ENCODE measurements at regions of chr3 and their contacts with region 1.

Region 1: GRCh38 chr3:190533511-190534277 is 19.8 kb downstream of the IL1RAP start:
- DNase-seq: peak; percentile 98
- H3K4me3 ChIP-seq: peak overlapping the region; percentile 13 to 30 (median 19)
- H3K27ac ChIP-seq: peak overlapping the region; percentile 95
- H3K4me1 ChIP-seq: peaks cover 70% of the 10 kb centered on the region
- H3K27me3 ChIP-seq: no peaks in the 10 kb centered on the region
- CTCF ChIP-seq: no peak

Region 2: GRCh38 chr3:189883113-189883753 is 650.5 kb before region 1 on chr3:
- CTCF ChIA-PET with region 1: no interaction called
- dilution Hi-C with region 1: no loop called
- in situ Hi-C with region 1: no loop called
- intact Hi-C with region 1: no loop called
- DNase-seq: no peak
- H3K4me3 ChIP-seq: no peak overlapping the region
- H3K27ac ChIP-seq: no peak overlapping the region
- H3K4me1 ChIP-seq: no peaks in the 10 kb centered on the region
- H3K27me3 ChIP-seq: no peaks in the 10 kb centered on the region
- CTCF ChIP-seq: no peak

Region 3: DNA sequence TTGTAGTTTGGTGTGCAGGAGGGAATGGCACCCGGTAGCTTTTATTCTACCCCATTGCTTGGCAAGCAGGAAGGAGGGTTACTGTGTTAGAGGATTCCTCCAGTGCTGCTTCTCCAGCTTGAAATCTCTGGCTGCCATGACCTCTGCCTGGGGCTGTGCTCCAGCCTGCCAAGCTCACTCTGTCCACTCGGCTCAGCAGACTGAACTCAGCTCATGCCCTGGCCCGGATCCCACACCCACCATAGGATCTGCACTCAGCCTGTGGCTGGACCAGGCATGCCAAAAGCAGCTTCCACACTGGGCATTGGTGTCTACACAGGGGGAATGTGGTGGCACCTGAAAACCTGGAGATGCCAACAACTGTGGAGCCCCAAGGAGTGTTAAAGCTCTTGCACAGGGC is 119.4 kb before region 1 on chr3:
- CTCF ChIA-PET with region 1: no interaction called
- dilution Hi-C with region 1: no loop called
- in situ Hi-C with region 1: no loop called
- intact Hi-C with region 1: no loop called
- DNase-seq: no peak
- H3K4me3 ChIP-seq: no peak overlapping the region
- H3K27ac ChIP-seq: no peak overlapping the region
- H3K4me1 ChIP-seq: no peaks in the 10 kb centered on the region
- H3K27me3 ChIP-seq: no peaks in the 10 kb centered on the region
- CTCF ChIP-seq: no peak

Region 4: DNA sequence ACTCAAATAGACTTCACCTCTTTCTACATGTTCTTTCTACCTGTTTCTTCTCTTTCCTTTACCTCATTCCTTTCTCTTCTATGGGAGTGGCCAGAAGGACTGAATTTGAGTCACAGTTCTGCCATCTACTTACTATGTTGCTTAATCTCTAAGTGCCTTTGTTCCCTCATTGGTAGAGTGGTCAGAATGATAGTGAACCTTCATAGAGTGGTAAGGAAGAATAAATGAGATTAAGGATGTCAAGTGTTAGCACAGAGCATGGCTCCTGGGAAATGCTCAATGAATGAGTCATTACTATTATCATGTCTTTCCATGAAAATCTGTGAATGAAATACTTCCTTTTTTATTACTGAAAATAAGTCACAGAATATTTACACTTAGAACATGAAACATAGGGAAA is 101.5 kb before region 1 on chr3:
- CTCF ChIA-PET with region 1: no interaction called
- dilution Hi-C with region 1: no loop called
- in situ Hi-C with region 1: no loop called
- intact Hi-C with region 1: no loop called
- DNase-seq: peak; percentile 63
- H3K4me3 ChIP-seq: no peak overlapping the region
- H3K27ac ChIP-seq: no peak overlapping the region
- H3K4me1 ChIP-seq: peaks cover 30% of the 10 kb centered on the region
- H3K27me3 ChIP-seq: no peaks in the 10 kb centered on the region
- CTCF ChIP-seq: no peak

Region 5: GRCh38 chr3:190566043-190566933 is 32.6 kb after region 1 on chr3:
- CTCF ChIA-PET with region 1: no interaction called
- dilution Hi-C with region 1: no loop called
- in situ Hi-C with region 1: no loop called
- intact Hi-C with region 1: loop called (anchors 1 kb)
- DNase-seq: peak; percentile 100
- H3K4me3 ChIP-seq: no peak overlapping the region
- H3K27ac ChIP-seq: peak overlapping the region; percentile 96
- H3K4me1 ChIP-seq: peaks cover 28% of the 10 kb centered on the region
- H3K27me3 ChIP-seq: no peaks in the 10 kb centered on the region
- CTCF ChIP-seq: no peak

Region 6: DNA sequence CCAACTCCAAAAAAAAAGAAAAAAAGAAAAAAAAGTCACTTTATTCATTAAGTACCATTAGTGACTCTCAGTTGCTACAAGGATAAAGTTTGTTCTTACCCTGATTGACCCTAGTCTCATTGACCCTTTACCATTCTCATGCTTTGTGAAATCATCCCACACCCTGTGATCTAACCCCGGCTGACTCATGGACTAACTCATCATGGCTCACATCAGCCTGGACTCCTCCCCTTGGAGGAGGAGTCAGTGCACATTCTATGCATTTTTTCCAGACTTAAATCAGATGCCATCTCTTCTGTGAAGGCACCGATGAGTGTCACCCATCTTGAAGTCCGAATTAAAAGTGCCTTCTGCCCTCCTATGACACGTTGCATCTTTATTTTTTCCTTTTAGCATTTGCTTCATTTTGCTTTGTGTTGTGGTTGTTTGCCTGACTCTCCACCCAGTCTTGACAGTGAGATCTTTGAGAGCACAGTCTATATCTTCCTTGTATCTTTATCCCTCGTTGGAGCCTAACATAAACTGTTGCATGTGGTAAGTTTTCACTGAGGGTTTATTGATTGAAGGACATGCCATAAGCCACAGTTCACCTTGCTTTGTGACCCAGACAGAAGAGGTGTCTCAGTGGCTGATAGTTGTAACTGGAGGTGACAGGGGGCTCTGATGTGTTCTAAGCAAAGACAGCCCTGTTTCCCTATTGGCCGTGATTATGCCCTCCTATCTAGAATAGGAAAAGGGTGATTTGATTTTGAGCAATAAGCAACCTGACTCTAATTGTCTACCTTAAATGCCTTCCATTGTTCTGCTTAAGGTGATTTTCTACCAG is 52.3 kb after region 1 on chr3:
- CTCF ChIA-PET with region 1: no interaction called
- dilution Hi-C with region 1: no loop called
- in situ Hi-C with region 1: no loop called
- intact Hi-C with region 1: loop called (anchors 5 kb)
- DNase-seq: peak; percentile 96
- H3K4me3 ChIP-seq: peak overlapping the region in 2 of 3 experiments; percentile 3 to 28
- H3K27ac ChIP-seq: peak overlapping the region; percentile 94
- H3K4me1 ChIP-seq: peaks cover 28% of the 10 kb centered on the region
- H3K27me3 ChIP-seq: no peaks in the 10 kb centered on the region
- CTCF ChIP-seq: no peak